ENCODE measurements at regions of chr2 and their contacts with region 1.

Region 1: DNA sequence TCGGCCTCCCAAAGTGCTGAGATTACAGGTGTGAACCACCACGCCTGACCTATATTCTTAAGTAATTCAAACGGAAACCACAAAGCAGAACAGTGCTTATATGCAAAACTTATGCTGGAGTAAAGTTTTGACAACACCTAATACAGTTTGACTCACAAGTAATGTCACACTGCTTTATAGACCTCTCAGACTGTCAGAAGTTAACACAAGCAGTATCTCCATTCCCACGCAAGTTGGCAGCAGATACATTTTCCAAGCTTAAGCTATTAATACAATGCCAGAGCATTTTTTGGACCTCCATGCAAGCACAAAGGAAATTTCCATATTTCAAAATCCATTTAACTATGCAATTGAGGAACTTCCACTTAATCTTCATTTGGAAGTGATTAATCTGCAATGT is 21.0 kb upstream of the SANBR start:
- DNase-seq: no peak
- ATAC-seq: peak in 1 of 2 donors; percentile 15
- H3K4me3 ChIP-seq: no peak overlapping the region
- H3K27ac ChIP-seq: peak overlapping the region; percentile 62 to 87 (median 76)
- H3K4me1 ChIP-seq: peaks cover 20 to 34% of the 10 kb centered on the region in 2 donors
- H3K27me3 ChIP-seq: no peaks in the 10 kb centered on the region
- CTCF ChIP-seq: no peak
- POLR2A ChIP-seq: no peak

Region 2: DNA sequence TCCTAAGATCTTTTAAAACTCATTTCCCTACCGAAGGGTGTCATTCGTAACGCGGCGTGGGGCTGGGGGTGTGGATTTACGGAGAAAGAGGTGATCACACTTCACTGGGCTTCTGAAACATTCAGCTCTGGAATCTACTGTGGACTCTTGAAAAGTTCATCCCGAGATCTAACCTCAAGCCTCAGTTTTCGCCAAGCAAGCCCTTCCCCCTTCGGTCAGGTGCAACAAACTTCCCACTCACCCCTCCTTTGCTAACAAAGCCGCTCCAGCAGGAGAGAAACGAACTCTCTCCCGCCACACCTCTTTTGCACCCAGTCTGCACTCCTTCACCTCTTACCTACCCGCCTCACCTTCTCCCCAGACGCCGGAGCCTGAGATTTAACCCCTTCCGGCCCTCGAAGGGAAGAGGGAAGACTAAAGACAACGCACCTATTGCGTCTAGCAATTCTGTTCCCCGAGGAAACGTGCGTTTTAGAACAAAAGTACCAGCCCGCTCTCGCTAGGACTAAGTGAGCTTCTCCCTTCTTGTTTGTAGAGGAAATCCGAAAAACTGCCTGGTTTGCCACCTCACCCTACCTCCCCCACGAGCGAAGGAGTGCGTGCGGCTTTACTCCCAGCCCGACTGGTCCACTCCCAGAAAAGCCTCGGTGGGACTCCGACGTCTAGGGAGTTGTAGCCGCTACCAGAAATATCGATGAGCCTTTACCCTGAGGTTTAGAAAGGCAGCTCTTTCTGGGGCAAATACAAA is 27.7 kb before region 1 on chr2:
- in situ Hi-C with region 1: no loop called
- intact Hi-C with region 1: loop called (anchors 1 kb)
- DNase-seq: peak; percentile 70
- ATAC-seq: peak; percentile 90 to 93
- H3K4me3 ChIP-seq: peak overlapping the region; percentile 85 to 94 (median 90)
- H3K27ac ChIP-seq: peak overlapping the region; percentile 94 to 96 (median 95)
- H3K4me1 ChIP-seq: peaks cover 35 to 38% of the 10 kb centered on the region in 2 donors
- H3K27me3 ChIP-seq: no peaks in the 10 kb centered on the region
- CTCF ChIP-seq: no peak
- POLR2A ChIP-seq: peak in 1 of 2 donors; percentile 82

Region 3: DNA sequence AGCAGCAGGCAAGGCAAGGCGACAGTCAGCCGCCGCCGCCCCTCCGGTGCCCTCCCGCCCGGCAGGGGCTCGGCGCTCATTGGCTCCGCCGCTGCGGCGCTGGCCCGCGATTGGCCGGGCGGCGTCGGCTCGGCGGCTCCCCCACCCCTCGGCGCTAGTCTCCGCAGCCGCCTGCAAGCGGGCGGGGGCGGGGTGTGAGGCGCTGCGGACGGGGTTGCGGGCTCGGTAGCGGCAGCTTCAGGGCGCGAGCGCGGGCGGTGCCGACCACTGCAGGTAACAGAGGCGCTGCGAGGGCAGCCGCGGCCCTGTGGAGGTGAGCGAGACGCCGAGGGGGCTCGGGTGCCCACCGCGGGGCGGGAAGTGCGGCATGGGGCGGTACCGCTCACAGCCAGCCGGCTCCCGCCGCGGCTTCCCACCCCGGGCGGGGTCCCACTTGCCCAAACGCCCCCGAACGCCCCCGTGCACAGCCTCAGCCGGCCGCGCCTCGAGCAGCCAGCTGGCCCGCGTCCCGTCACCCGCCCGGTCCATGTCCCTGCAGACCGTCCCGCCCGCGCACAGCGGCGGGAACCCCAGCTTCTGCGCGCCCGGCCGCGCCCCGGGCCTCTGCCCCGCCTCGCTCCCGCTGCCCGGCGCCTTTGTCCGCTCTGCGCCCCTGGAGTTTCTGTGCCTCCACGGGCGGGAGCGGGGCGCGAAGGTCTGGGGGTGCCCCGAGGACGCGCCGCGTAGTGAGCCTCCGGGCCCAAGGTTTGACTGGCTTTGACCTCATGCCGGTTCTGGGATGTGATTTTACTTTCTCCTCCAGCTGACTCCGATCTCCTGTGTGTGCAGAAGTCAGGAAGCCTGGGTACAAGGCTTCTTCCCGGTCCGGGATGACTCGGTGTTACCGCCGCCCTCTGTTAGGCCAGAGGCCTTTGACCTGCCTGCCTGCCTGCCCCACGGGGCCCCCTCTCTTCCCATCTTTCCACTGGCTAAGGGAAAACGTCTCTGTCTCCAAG is 21.4 kb after region 1 on chr2 and contains the start of gene SANBR:
- in situ Hi-C with region 1: no loop called
- intact Hi-C with region 1: loop called (anchors 2 kb)
- DNase-seq: peak; percentile 77 to 87
- ATAC-seq: peak; percentile 93 to 94
- H3K4me3 ChIP-seq: peak within 1 kb of the TSS; percentile 66 to 94 (median 78)
- H3K27ac ChIP-seq: peak within 1 kb of the TSS; percentile 69 to 89 (median 85)
- H3K4me1 ChIP-seq: peaks cover 5 to 16% of the 10 kb centered on the region in 2 donors
- H3K27me3 ChIP-seq: no peaks in the 10 kb centered on the region
- CTCF ChIP-seq: peak in 2 of 5 experiments; percentile 8 to 37
- POLR2A ChIP-seq: peak; percentile 71 to 80
- total RNA-seq, gene SANBR: 1.5 to 6.5 (median 2.1) TPM

Region 4: DNA sequence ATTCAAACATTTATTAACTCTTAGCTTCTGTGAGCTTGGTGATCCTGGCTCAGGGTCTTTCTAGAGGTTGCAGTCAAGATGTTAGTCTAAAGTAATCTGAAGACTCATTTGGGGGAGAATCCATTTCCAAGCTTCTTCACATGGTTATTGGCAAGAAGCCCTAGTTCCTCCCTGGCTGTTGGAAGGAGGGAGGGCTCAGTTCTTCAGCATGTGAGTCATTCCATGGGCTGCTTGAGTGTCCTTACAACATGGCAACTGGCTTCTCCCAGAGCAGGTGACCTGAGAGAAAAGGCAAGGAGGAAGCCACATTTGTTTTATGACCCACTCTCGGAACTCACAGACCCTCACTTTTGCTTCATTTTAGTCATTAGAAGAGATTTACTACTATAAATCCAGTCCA is 106.8 kb after region 1 on chr2:
- in situ Hi-C with region 1: no loop called
- intact Hi-C with region 1: no loop called
- DNase-seq: no peak
- ATAC-seq: no peak
- H3K4me3 ChIP-seq: no peak overlapping the region
- H3K27ac ChIP-seq: no peak overlapping the region
- H3K4me1 ChIP-seq: no peaks in the 10 kb centered on the region
- H3K27me3 ChIP-seq: no peaks in the 10 kb centered on the region
- CTCF ChIP-seq: no peak
- POLR2A ChIP-seq: no peak

Region 5: GRCh38 chr2:61854474-61855182 is 810.0 kb after region 1 on chr2:
- in situ Hi-C with region 1: no loop called
- intact Hi-C with region 1: loop called (anchors 10 kb)
- DNase-seq: peak; percentile 90 to 93
- ATAC-seq: peak; percentile 97 to 98
- H3K4me3 ChIP-seq: peak overlapping the region; percentile 80 to 89 (median 82)
- H3K27ac ChIP-seq: peak overlapping the region; percentile 89 to 93 (median 90)
- H3K4me1 ChIP-seq: peaks cover 8 to 13% of the 10 kb centered on the region in 2 donors
- H3K27me3 ChIP-seq: no peaks in the 10 kb centered on the region
- CTCF ChIP-seq: no peak
- POLR2A ChIP-seq: no peak